H1 (cell line): ENCODE measurements at regions of chr15 and their contacts with region 1.

Region 1: GRCh38 chr15:57866149-57866736 is 159.7 kb downstream of the POLR2M start:
- DNase-seq: peak; percentile 38 to 87
- H3K4me3 ChIP-seq: no peak overlapping the region
- H3K27ac ChIP-seq: no peak overlapping the region
- H3K4me1 ChIP-seq: no peaks in the 10 kb centered on the region
- H3K27me3 ChIP-seq: no peaks in the 10 kb centered on the region
- CTCF ChIP-seq: peak; percentile 61 to 90 (median 78)
- EP300 ChIP-seq: no peak
- POLR2A ChIP-seq: no peak
- RAD21 ChIP-seq: peak; percentile 64 to 78

Region 2: DNA sequence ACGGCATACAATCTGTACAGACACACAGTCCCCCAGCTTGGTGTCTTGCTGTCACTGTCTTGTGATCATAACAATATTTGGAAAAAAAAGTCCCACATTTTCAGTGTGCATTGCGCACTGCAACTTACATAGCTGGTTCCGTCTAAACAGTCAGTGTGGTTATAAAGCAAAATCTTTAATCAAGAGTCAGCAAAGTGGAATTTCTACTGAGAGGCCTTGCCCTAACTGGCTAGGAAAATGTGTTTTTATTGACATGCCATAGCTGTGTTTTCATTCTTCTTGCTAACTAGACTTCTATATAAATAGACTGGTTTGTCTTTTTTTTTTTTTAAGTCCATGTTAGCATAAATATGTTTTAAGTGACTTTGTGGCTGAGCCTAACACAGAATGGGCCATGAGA is 15.1 kb after region 1 on chr15:
- CTCF ChIA-PET with region 1: interaction called, 17 read pairs
- POLR2A ChIA-PET with region 1: no interaction called
- DNase-seq: no peak
- H3K4me3 ChIP-seq: no peak overlapping the region
- H3K27ac ChIP-seq: no peak overlapping the region
- H3K4me1 ChIP-seq: no peaks in the 10 kb centered on the region
- H3K27me3 ChIP-seq: no peaks in the 10 kb centered on the region
- CTCF ChIP-seq: no peak
- EP300 ChIP-seq: no peak
- POLR2A ChIP-seq: no peak
- RAD21 ChIP-seq: no peak

Region 3: GRCh38 chr15:58171476-58172057 is 305.3 kb after region 1 on chr15:
- CTCF ChIA-PET with region 1: interaction called, 13 read pairs
- POLR2A ChIA-PET with region 1: no interaction called
- DNase-seq: no peak
- H3K4me3 ChIP-seq: no peak overlapping the region
- H3K27ac ChIP-seq: no peak overlapping the region
- H3K4me1 ChIP-seq: no peaks in the 10 kb centered on the region
- H3K27me3 ChIP-seq: no peaks in the 10 kb centered on the region; a peak in 1 of 7 replicates
- CTCF ChIP-seq: no peak
- EP300 ChIP-seq: no peak
- POLR2A ChIP-seq: no peak
- RAD21 ChIP-seq: no peak

Region 4: DNA sequence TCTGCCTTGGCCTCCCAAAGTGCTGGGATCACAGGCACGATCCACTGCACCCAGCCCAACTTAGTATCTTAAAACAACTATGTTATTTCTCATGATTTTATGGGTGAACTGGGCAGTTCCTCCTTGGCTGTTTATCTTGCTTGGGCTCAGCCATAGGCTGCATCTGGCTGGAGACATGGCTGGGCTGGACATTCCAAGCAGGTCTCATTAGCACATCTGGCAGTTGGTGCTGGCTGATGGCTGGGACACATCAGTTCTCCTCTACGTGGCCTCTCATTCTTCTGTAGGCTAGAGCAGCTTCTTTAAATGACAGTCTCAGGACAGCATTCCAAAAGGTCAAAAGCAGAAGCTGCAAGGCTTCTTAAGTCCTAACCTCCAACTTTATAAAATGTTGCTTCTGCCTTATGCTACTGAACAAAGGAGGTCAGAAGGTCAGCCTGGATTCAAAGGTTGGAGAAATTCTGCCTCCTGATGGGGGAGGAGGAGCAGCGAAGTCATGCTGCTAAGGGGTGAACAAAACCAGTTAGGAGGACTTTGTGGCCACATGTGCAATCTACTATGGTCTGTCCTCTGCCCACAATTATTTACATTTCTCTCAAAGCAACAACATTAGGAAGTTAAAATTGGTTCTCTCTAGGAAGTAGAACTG is 415.9 kb after region 1 on chr15:
- CTCF ChIA-PET with region 1: no interaction called
- POLR2A ChIA-PET with region 1: no interaction called
- DNase-seq: no peak
- H3K4me3 ChIP-seq: no peak overlapping the region
- H3K27ac ChIP-seq: no peak overlapping the region
- H3K4me1 ChIP-seq: peaks cover 0 to 2% (median 0%) of the 10 kb centered on the region in 4 experiments; a peak in 2 of 7 replicates
- H3K27me3 ChIP-seq: no peaks in the 10 kb centered on the region
- CTCF ChIP-seq: no peak
- EP300 ChIP-seq: no peak
- POLR2A ChIP-seq: no peak
- RAD21 ChIP-seq: no peak